ENCODE measurements at regions of chr2 and their contacts with region 1.

Region 1: DNA sequence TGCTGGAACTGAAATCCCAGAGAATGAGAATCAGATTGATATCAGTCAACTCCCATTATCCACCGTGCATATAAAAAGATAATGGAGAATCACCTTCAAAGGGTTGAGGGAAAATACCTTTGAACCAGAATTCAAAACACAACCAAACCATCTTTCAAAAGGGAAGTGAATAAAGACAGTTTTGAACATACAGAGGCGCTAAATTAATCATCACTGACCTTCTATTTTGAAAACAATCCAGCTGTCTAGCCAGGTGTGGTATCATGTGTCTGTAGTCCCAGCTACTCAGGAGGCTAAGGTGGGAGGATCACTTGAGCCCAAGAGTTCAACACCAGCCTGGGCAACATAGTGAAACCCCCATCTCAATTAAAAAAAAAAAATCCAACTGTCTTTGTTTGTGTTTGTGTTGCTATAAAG is 63.6 kb downstream of the TRABD2A start:
- DNase-seq: no peak
- ATAC-seq: peak; percentile 80
- H3K4me3 Mint-ChIP-seq: peak overlapping the region; percentile 29
- H3K27ac Mint-ChIP-seq: peak overlapping the region; percentile 78
- H3K4me1 Mint-ChIP-seq: peaks cover 27% of the 10 kb centered on the region
- H3K27me3 Mint-ChIP-seq: peaks cover 2% of the 10 kb centered on the region
- CTCF ChIP-seq: no peak

Region 2: GRCh38 chr2:84781942-84782716 is 35.1 kb before region 1 on chr2:
- CTCF ChIA-PET with region 1: no interaction called
- POLR2A ChIA-PET with region 1: no interaction called
- intact Hi-C with region 1: loop called (anchors 2 kb)
- DNase-seq: no peak
- ATAC-seq: peak; percentile 99
- H3K4me3 Mint-ChIP-seq: peak overlapping the region; percentile 28
- H3K27ac Mint-ChIP-seq: peak overlapping the region; percentile 78
- H3K4me1 Mint-ChIP-seq: peaks cover 37% of the 10 kb centered on the region
- H3K27me3 Mint-ChIP-seq: no peaks in the 10 kb centered on the region
- CTCF ChIP-seq: no peak

Region 3: DNA sequence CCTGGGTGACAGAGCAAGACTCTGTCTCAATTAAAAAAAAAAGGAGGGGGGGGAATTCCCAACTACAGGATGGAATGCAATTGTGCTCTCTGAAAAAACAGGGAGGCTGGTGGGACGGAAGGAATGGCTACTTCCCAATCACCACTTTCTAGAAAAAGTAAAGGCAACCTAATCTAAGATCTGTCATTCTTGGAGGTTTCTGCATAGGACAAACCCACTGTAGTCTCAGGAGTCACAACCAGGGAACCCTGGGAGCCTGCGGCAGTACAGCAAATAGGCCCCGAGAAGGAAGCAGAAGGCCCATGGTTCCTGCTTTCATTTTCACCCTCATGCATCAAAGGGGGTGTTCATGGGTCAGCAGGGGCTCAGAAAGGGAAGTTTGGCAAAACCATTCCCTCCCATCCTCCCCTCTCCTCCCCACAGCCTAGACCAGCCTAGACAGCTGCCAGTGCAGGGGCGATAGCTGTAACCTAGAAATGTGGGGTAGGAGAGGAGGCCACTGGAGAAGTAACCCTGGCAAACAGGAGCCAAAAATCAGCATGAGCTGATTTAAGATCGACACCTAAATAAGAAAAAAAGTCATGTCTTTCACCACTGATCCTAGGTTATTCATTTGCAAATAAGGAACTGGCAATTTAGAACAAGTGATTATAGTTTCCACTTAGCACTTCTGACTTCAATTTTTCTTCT is 15.7 kb after region 1 on chr2:
- CTCF ChIA-PET with region 1: no interaction called
- POLR2A ChIA-PET with region 1: interaction called, 6 read pairs
- intact Hi-C with region 1: loop called (anchors 1 kb)
- DNase-seq: peak; percentile 25
- ATAC-seq: peak; percentile 89
- H3K4me3 Mint-ChIP-seq: peak overlapping the region; percentile 58
- H3K27ac Mint-ChIP-seq: peak overlapping the region; percentile 84
- H3K4me1 Mint-ChIP-seq: peaks cover 25% of the 10 kb centered on the region
- H3K27me3 Mint-ChIP-seq: no peaks in the 10 kb centered on the region
- CTCF ChIP-seq: no peak

Measured in activated B cell treated with CpG ODN at 0.5 μM for 24 hours (primary cell).